ENCODE measurements at regions of chr17 and their contacts with region 1.

Region 1: GRCh38 chr17:18038861-18039534 is at the starts of genes ATPAF2 and GID4:
- DNase-seq: peak; percentile 99 to 100 (median 100)
- H3K4me3 ChIP-seq: peak within 1 kb of the TSS; percentile 72 to 79
- H3K4me3 Mint-ChIP-seq: peak within 1 kb of the TSS; percentile 92 to 100 (median 100)
- H3K27ac ChIP-seq: peak within 1 kb of the TSS; percentile 73
- H3K27ac Mint-ChIP-seq: peak within 1 kb of the TSS; percentile 80 to 100 (median 99)
- H3K4me1 ChIP-seq: peaks cover 26% of the 10 kb centered on the region
- H3K4me1 Mint-ChIP-seq: peaks cover 34 to 60% (median 48%) of the 10 kb centered on the region in 4 donors
- H3K27me3 ChIP-seq: no peaks in the 10 kb centered on the region
- H3K27me3 Mint-ChIP-seq: no peaks in the 10 kb centered on the region
- total RNA-seq, gene ATPAF2: 24.1 to 24.3 TPM
- total RNA-seq, gene GID4: 11.1 to 13.1 TPM

Region 2: GRCh38 chr17:17476865-17477467 is 562.0 kb before region 1 on chr17 and contains the start of gene MED9:
- CTCF ChIA-PET with region 1: no interaction called
- POLR2A ChIA-PET with region 1: no interaction called
- intact Hi-C with region 1: loop called (anchors 5 kb)
- DNase-seq: peak; percentile 92 to 94 (median 93)
- H3K4me3 ChIP-seq: peak within 1 kb of the TSS; percentile 87 to 99
- H3K4me3 Mint-ChIP-seq: peak within 1 kb of the TSS; percentile 89 to 95 (median 91)
- H3K27ac ChIP-seq: peak within 1 kb of the TSS; percentile 76
- H3K27ac Mint-ChIP-seq: peak within 1 kb of the TSS; percentile 84 to 97 (median 94)
- H3K4me1 ChIP-seq: peaks cover 45% of the 10 kb centered on the region
- H3K4me1 Mint-ChIP-seq: peaks cover 23 to 55% (median 42%) of the 10 kb centered on the region in 4 donors
- H3K27me3 ChIP-seq: no peaks in the 10 kb centered on the region
- H3K27me3 Mint-ChIP-seq: peaks cover 7 to 12% of the 10 kb centered on the region in 2 donors
- total RNA-seq, gene MED9: 17.1 to 18.9 TPM

Region 3: DNA sequence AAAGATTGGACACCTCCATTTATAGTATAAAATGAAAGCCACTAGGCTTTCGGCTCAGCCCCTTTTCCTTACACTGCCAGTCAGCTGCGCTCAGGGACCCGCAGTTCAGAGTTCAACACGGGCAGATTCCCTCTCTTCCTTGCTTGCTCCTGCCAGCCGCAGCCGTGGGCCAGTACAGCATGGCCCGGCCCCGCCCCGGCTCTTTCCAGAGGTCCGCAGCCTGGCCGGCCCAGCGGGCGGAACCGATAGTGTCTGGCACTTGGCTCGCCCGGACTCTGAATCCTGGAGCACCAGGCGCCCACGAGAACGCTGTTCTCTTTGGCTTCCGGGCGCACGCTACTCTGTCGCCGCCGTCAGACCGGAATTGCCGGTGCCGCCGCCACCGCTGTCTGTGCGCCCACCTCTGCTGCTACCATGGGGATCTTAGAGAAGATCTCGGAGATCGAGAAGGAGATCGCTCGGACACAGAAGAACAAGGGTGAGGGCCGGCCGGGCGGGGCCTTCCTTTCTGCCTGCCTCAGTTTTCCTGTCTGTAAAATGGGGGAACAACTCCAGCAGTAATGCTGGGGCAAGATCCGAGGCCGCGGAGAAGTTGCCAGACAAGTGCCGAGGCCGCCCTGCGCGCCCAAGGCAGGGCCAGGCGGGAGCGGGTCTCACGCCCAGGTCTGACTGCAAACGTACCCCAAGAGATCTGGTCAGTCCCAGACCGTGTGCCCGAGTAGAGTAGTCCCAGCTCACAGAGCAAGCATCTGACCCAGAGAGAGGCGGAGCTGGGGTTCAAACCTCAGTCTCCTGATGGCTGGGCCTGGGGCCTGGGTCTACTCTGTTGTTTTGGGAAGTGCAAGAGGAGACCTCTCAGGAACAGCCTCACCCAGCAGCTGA is 48.9 kb after region 1 on chr17 and contains the start of gene DRG2:
- CTCF ChIA-PET with region 1: no interaction called
- POLR2A ChIA-PET with region 1: no interaction called
- intact Hi-C with region 1: loop called (anchors 2 kb)
- DNase-seq: peak; percentile 84 to 90 (median 86)
- H3K4me3 ChIP-seq: peak within 1 kb of the TSS; percentile 71 to 99
- H3K4me3 Mint-ChIP-seq: peak within 1 kb of the TSS; percentile 98 to 100 (median 99)
- H3K27ac ChIP-seq: peak within 1 kb of the TSS; percentile 87
- H3K27ac Mint-ChIP-seq: peak within 1 kb of the TSS; percentile 98 to 99 (median 98)
- H3K4me1 ChIP-seq: peaks cover 23% of the 10 kb centered on the region
- H3K4me1 Mint-ChIP-seq: peaks cover 20 to 43% (median 25%) of the 10 kb centered on the region in 4 donors
- H3K27me3 ChIP-seq: no peaks in the 10 kb centered on the region
- H3K27me3 Mint-ChIP-seq: no peaks in the 10 kb centered on the region
- total RNA-seq, gene DRG2: 56.8 to 61.0 TPM